Naive thymus-derived CD4-positive, alpha-beta T cell (primary cell): ENCODE measurements at regions of chr19 and their contacts with region 1.

Region 1: DNA sequence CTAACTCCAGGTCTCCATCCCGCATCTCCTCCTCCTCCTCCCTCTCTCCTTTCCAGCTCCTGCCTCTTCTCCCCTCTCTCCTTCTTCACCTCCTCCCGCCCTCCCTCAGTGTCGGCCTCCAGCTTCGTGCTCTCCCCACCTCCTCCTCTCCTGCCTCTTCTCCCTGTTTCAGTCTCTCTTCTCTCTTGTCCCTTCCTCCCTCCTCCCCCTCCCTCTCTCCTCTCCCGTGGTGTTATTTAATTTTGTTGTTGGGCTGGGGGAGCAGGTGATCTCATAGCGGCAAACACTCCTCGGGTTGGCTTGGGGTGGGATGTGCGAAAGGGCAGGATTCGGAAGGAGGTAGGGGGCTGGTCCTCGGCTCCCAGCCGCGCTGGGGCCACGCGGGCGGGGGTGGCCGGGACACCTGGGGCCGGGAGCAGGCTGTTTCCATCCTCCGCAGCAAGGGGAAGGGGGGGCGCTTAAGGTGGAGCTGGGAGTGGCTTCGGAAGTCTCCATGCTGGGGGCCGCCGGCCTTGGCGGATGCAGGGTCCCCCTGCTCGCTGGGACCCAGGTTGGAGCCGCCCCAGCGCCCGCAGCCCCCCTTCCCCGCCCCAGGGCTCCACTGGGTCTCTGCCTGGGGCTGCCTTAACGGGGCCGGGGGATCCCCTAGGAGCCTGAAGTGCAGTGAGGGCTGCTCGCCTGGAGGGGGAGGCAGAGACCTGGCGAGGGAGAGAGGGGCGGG is at the start of gene CA11:
- DNase-seq: peak; percentile 89 to 97 (median 93)
- ATAC-seq: peak; percentile 94
- H3K4me3 ChIP-seq: peak within 1 kb of the TSS; percentile 94
- H3K4me3 Mint-ChIP-seq: peak within 1 kb of the TSS; percentile 86 to 99 (median 94)
- H3K27ac ChIP-seq: peak within 1 kb of the TSS; percentile 79
- H3K27ac Mint-ChIP-seq: peak within 1 kb of the TSS; percentile 87 to 98 (median 94)
- H3K4me1 ChIP-seq: peaks cover 21% of the 10 kb centered on the region in 2 donors
- H3K4me1 Mint-ChIP-seq: peaks cover 25 to 60% (median 44%) of the 10 kb centered on the region in 7 donors
- H3K27me3 ChIP-seq: no peaks in the 10 kb centered on the region
- H3K27me3 Mint-ChIP-seq: peaks cover 0 to 8% (median 0%) of the 10 kb centered on the region in 5 donors
- total RNA-seq, gene CA11: 7.5 to 20.5 (median 12.5) TPM

Region 2: DNA sequence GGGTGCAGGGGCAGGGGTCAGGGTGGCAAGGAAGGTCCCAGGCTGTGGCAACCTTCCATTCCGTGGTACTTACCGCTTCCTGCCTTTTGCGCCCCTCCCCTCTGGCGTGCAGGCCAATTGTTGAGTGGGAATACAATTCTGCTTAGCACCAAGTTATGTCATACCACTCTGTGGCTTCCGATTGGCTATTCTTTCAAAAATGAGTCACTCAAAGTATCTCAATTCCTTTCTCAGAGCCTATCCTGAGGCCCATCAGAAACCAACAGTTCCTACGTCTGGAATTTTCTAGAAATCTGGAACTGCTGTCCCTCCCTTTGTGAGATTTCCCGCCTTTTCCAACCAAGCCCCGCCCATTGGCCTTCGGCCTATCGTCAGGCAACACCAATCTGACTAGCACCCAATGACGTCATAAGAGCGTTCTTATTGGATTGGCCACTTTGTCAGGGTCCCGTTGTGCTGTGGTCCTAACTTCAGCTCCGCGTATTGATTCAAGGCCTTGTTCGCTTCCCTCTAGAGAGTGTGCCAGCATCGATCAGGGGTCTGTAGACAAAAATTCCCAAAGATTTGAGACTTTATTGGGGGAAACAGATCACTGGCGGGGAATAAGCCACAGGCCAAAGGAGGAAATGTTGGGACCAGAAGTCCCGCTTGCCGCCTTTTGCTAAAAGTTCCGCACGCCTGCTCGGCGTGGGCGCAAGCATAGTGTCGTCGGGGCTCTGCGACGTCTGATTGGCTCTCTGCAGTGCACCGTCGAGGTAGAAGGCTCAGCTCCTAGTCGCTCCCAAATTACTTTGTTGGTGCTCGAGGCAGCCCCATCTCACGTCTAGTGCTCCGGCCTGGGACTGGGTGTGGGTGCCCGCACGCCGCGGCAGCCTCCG is 14.9 kb after region 1 on chr19:
- CTCF ChIA-PET with region 1: interaction called, 8 read pairs
- POLR2A ChIA-PET with region 1: interaction called, 4 read pairs
- intact Hi-C with region 1: loop called (anchors 1 kb)
- DNase-seq: peak; percentile 51 to 90 (median 86)
- ATAC-seq: peak; percentile 95
- H3K4me3 ChIP-seq: peak overlapping the region; percentile 28
- H3K4me3 Mint-ChIP-seq: peak overlapping the region; percentile 63 to 86 (median 80)
- H3K27ac ChIP-seq: peak overlapping the region; percentile 72
- H3K27ac Mint-ChIP-seq: peak overlapping the region; percentile 17 to 98 (median 94)
- H3K4me1 ChIP-seq: peaks cover 6 to 9% of the 10 kb centered on the region in 2 donors
- H3K4me1 Mint-ChIP-seq: peaks cover 7 to 16% (median 10%) of the 10 kb centered on the region in 7 donors
- H3K27me3 ChIP-seq: no peaks in the 10 kb centered on the region
- H3K27me3 Mint-ChIP-seq: peaks cover 0 to 11% (median 0%) of the 10 kb centered on the region in 5 donors

Region 3: DNA sequence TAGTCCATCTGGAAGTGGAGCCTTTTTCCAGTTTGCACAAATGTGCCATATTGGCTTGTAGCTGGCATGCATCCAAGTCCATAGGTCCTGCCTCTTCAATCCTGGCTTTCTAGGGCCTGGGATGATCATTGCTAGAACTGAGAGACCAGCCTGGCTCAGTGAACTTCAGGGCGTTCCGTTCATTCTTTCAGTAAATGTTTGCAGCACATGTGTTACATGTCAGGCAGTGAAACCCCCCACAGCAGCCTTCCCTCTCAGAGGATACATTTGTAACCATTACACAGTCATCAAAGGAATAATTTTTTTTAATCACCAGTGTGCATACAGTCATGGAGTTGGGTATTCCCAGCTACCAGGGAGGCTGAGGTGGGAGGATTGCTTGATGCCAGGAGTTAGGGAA is 59.3 kb after region 1 on chr19:
- CTCF ChIA-PET with region 1: no interaction called
- POLR2A ChIA-PET with region 1: no interaction called
- intact Hi-C with region 1: no loop called
- DNase-seq: no peak
- ATAC-seq: no peak
- H3K4me3 ChIP-seq: no peak overlapping the region
- H3K4me3 Mint-ChIP-seq: no peak overlapping the region
- H3K27ac ChIP-seq: no peak overlapping the region
- H3K27ac Mint-ChIP-seq: no peak overlapping the region
- H3K4me1 ChIP-seq: no peaks in the 10 kb centered on the region
- H3K4me1 Mint-ChIP-seq: peaks cover 0 to 5% (median 0%) of the 10 kb centered on the region in 7 donors
- H3K27me3 ChIP-seq: no peaks in the 10 kb centered on the region
- H3K27me3 Mint-ChIP-seq: no peaks in the 10 kb centered on the region

Region 4: DNA sequence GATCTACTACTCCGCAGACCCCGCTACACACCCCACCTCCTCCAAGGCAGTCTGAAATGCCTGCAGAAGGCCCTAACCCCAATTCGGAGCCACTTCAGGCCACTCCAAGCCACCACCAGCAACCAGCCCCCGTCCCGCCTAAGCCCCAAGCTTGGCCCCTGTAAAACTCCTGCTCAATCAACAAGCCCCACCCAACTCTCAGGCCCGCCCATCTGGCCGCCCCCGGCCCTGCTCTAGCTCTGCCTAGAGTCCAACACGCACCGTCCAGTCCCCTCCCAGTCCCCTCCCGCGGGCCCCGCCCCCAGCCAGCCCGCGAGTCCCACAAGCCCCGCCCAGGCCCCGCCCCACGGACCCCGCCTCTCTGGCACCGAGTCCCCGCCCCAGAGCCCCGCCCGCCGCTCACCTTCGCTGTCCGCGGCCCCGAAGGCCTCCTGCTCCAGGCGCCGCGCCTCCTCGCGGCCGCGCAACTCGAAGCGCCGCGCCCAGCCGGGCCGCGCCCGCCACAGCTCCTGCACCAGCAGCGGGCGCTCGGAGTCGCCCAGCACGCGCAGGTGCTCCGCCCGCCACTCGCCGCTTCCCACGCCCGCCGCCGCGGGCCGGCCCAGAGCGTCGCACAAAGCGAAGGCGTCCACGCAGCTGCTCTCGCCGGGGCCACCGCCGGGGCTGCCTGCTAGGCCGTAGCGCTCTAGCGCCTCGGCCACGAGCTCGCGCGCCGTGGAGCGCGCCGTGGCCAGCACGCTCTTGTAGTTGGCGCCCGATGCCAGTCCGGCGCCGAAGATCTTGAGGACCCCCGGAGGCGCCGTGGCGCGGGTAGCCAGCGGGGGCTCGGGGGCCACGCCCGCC is 92.6 kb after region 1 on chr19:
- CTCF ChIA-PET with region 1: interaction called, 11 read pairs
- POLR2A ChIA-PET with region 1: interaction called, 3 read pairs
- intact Hi-C with region 1: loop called (anchors 1 to 2 kb)
- DNase-seq: peak; percentile 73 to 95 (median 84)
- ATAC-seq: peak; percentile 97
- H3K4me3 ChIP-seq: peak overlapping the region; percentile 53
- H3K4me3 Mint-ChIP-seq: peak overlapping the region in 9 of 10 donors; percentile 48 to 74 (median 66)
- H3K27ac ChIP-seq: peak overlapping the region; percentile 41
- H3K27ac Mint-ChIP-seq: peak overlapping the region in 7 of 9 donors; percentile 17 to 68 (median 52)
- H3K4me1 ChIP-seq: peaks cover 4 to 26% of the 10 kb centered on the region in 2 donors
- H3K4me1 Mint-ChIP-seq: peaks cover 7 to 22% (median 17%) of the 10 kb centered on the region in 7 donors
- H3K27me3 ChIP-seq: no peaks in the 10 kb centered on the region
- H3K27me3 Mint-ChIP-seq: peaks cover 0 to 20% (median 0%) of the 10 kb centered on the region in 5 donors

Region 5: DNA sequence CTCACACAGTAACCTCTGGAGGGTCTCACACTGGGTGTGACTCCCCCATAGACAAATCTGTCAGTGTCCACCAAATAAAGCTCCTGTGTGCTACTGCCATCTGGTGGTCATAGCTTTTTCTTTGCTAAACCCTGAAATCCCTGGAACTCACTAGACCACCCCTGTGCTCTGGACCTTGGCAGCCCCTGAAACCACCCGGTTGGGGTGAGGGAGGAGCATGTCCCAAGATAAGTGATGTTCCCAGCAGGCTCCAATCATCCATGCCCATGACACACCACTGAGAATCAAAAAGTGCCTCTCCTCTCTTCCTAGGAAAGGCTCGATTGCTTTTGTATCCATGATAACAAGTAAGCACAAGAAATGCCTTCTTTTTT is 196.6 kb after region 1 on chr19:
- CTCF ChIA-PET with region 1: interaction called, 6 read pairs
- POLR2A ChIA-PET with region 1: interaction called, 3 read pairs
- intact Hi-C with region 1: loop called (anchors 1 to 2 kb)
- DNase-seq: peak in 8 of 9 donors; percentile 37 to 62 (median 49)
- ATAC-seq: peak; percentile 67
- H3K4me3 ChIP-seq: no peak overlapping the region
- H3K4me3 Mint-ChIP-seq: peak overlapping the region in 1 of 10 donors; percentile 53
- H3K27ac ChIP-seq: no peak overlapping the region
- H3K27ac Mint-ChIP-seq: peak overlapping the region in 3 of 9 donors; percentile 44 to 53 (median 51)
- H3K4me1 ChIP-seq: no peaks in the 10 kb centered on the region
- H3K4me1 Mint-ChIP-seq: peaks cover 0 to 6% (median 3%) of the 10 kb centered on the region in 7 donors
- H3K27me3 ChIP-seq: no peaks in the 10 kb centered on the region
- H3K27me3 Mint-ChIP-seq: peaks cover 0 to 2% (median 0%) of the 10 kb centered on the region in 5 donors

Region 6: DNA sequence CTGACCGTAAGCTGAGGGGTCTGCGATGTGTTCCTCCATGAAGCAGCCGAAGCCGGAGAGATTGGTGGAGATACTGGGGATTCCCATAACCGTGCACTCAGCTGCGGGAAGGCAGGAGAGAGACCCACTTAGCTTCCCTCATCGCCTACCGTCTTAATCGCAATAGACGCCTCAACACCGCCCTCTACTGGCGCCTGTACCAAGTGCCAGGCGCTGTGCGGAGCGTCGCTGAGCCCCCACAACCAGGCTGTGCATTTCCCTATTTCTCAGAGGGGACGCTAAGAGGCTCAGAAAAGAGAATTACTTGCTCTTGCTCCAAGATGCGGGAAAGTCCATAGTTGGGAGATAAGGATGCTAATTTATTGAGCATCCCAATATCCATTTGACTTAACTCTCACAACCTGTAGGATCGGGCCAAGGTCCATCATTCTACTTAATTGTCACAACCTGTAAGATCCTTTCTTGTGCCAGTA is 324.8 kb after region 1 on chr19:
- CTCF ChIA-PET with region 1: no interaction called
- POLR2A ChIA-PET with region 1: interaction called, 4 read pairs
- intact Hi-C with region 1: loop called (anchors 1 to 5 kb)
- DNase-seq: peak; percentile 57 to 81 (median 72)
- ATAC-seq: peak; percentile 85
- H3K4me3 ChIP-seq: no peak overlapping the region
- H3K4me3 Mint-ChIP-seq: peak overlapping the region in 1 of 10 donors; percentile 18
- H3K27ac ChIP-seq: no peak overlapping the region
- H3K27ac Mint-ChIP-seq: peak overlapping the region in 4 of 9 donors; percentile 26 to 77 (median 42)
- H3K4me1 ChIP-seq: peaks cover 8 to 11% of the 10 kb centered on the region in 2 donors
- H3K4me1 Mint-ChIP-seq: peaks cover 5 to 26% (median 20%) of the 10 kb centered on the region in 7 donors
- H3K27me3 ChIP-seq: no peaks in the 10 kb centered on the region
- H3K27me3 Mint-ChIP-seq: no peaks in the 10 kb centered on the region